Activated CD4-positive, alpha-beta T cell treated with anti-CD3 and anti-CD28 coated beads for 36 hours (primary cell): ENCODE measurements at regions of chr14 and their contacts with region 1.

Region 1: GRCh38 chr14:35285168-35286002 is 6.8 kb upstream of the PSMA6 start:
- DNase-seq: peak; percentile 40
- ATAC-seq: peak; percentile 59
- H3K4me3 Mint-ChIP-seq: peak overlapping the region; percentile 24
- H3K27ac Mint-ChIP-seq: peak overlapping the region; percentile 97
- H3K4me1 Mint-ChIP-seq: peaks cover 56% of the 10 kb centered on the region
- H3K27me3 Mint-ChIP-seq: no peaks in the 10 kb centered on the region

Region 2: GRCh38 chr14:34931206-34931605 is 354.2 kb before region 1 on chr14:
- CTCF ChIA-PET with region 1: no interaction called
- POLR2A ChIA-PET with region 1: no interaction called
- intact Hi-C with region 1: loop called in 1 of 2 experiments (anchors 5 kb)
- DNase-seq: peak; percentile 25
- ATAC-seq: peak; percentile 72
- H3K4me3 Mint-ChIP-seq: peak overlapping the region; percentile 47
- H3K27ac Mint-ChIP-seq: peak overlapping the region; percentile 100
- H3K4me1 Mint-ChIP-seq: peaks cover 44% of the 10 kb centered on the region
- H3K27me3 Mint-ChIP-seq: no peaks in the 10 kb centered on the region

Region 3: GRCh38 chr14:35222872-35223466 is 62.4 kb before region 1 on chr14:
- CTCF ChIA-PET with region 1: no interaction called
- POLR2A ChIA-PET with region 1: no interaction called
- intact Hi-C with region 1: loop called (anchors 2 to 5 kb)
- DNase-seq: no peak
- ATAC-seq: peak; percentile 55
- H3K4me3 Mint-ChIP-seq: no peak overlapping the region
- H3K27ac Mint-ChIP-seq: peak overlapping the region; percentile 57
- H3K4me1 Mint-ChIP-seq: peaks cover 29% of the 10 kb centered on the region
- H3K27me3 Mint-ChIP-seq: no peaks in the 10 kb centered on the region

Region 4: DNA sequence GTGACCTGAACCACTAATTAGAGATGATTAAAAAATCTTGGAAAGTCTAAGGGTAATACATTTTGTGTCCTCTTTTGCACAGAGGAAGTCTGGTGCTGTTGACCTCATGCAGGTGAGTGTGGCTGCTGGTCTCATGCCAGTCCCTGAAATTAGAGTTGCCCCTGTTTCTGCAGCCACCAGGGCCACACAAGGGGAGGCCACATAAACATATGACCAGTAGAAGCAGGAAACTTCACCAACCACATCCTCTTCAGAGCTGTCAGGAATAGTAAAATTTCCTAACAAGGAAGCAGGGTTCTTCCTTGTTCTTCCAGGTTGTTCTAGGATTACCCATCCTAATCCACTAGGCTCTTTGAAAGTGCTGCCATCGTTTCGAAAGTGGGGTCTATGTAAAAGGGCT is 35.1 kb after region 1 on chr14:
- CTCF ChIA-PET with region 1: interaction called, 14 read pairs
- POLR2A ChIA-PET with region 1: interaction called, 4 read pairs
- intact Hi-C with region 1: loop called in 1 of 2 experiments (anchors 2 kb)
- DNase-seq: no peak
- ATAC-seq: peak; percentile 23
- H3K4me3 Mint-ChIP-seq: no peak overlapping the region
- H3K27ac Mint-ChIP-seq: no peak overlapping the region
- H3K4me1 Mint-ChIP-seq: no peaks in the 10 kb centered on the region
- H3K27me3 Mint-ChIP-seq: no peaks in the 10 kb centered on the region

Region 5: DNA sequence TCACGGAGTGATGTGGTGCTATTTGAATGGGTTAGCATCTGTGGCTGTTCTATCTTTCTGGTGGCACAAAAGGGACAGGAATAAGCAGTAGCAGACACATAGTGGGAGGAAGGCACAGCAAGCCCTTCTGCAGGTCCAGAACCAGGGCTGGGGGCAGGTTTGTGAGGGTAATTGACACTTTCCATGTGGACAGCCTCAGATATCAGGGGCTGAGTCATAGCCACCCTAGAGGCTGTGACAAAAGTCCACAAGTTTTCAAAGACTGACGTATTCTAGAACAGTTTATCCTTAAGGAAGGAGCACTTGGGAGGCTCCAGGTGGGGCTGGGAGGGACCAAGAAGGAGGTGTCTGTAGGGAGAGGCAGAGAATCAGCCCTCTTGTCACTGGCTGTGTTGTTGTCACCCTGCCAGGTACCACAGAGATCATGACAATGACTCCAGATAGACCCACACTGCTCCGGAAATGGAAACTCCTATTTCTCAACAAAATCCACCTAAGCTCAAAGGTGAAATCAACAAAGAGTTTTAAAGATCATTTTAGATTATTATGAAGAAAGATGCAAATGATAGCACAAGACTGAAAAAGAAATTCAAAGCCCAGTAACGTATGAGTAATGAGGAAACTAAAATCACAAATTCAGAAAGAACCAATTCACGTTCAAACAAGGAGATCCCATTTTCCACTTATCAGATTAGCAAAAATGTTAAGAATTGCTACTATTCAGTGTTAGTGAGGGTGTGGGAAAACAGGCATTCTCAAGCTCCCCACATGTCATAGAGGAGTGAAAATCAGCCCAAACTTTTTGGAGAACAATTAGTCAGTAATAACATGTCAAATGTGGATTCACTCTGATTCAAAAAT is 70.8 kb after region 1 on chr14:
- CTCF ChIA-PET with region 1: interaction called, 4 read pairs
- POLR2A ChIA-PET with region 1: no interaction called
- intact Hi-C with region 1: loop called (anchors 1 kb)
- DNase-seq: peak; percentile 79
- ATAC-seq: peak; percentile 85
- H3K4me3 Mint-ChIP-seq: peak overlapping the region; percentile 30
- H3K27ac Mint-ChIP-seq: peak overlapping the region; percentile 91
- H3K4me1 Mint-ChIP-seq: peaks cover 46% of the 10 kb centered on the region
- H3K27me3 Mint-ChIP-seq: no peaks in the 10 kb centered on the region